Caco-2 (cell line): ENCODE measurements at regions of chr7 and their contacts with region 1.

Region 1: GRCh38 chr7:143345428-143345900 is 17.0 kb downstream of the FAM131B start:
- DNase-seq: peak; percentile 85 to 86
- H3K4me3 ChIP-seq: peak overlapping the region; percentile 36
- H3K4me3 Mint-ChIP-seq: peak overlapping the region; percentile 78
- H3K27ac Mint-ChIP-seq: peak overlapping the region; percentile 40
- H3K4me1 ChIP-seq: no peaks in the 10 kb centered on the region
- H3K4me1 Mint-ChIP-seq: peaks cover 6% of the 10 kb centered on the region
- H3K27me3 ChIP-seq: no peaks in the 10 kb centered on the region
- H3K27me3 Mint-ChIP-seq: no peaks in the 10 kb centered on the region
- CTCF ChIP-seq: peak; percentile 58 to 86

Region 2: GRCh38 chr7:143279186-143280098 is 66.0 kb before region 1 on chr7:
- CTCF ChIA-PET with region 1: no interaction called
- POLR2A ChIA-PET with region 1: no interaction called
- intact Hi-C with region 1: no loop called
- DNase-seq: peak in 1 of 2 experiments; percentile 46
- H3K4me3 ChIP-seq: no peak overlapping the region
- H3K4me3 Mint-ChIP-seq: no peak overlapping the region
- H3K27ac Mint-ChIP-seq: peak overlapping the region; percentile 42
- H3K4me1 ChIP-seq: peaks cover 21% of the 10 kb centered on the region
- H3K4me1 Mint-ChIP-seq: peaks cover 24% of the 10 kb centered on the region
- H3K27me3 ChIP-seq: no peaks in the 10 kb centered on the region
- H3K27me3 Mint-ChIP-seq: no peaks in the 10 kb centered on the region
- CTCF ChIP-seq: no peak

Region 3: GRCh38 chr7:143362131-143363015 is 16.9 kb after region 1 on chr7 and contains the start of gene FAM131B:
- CTCF ChIA-PET with region 1: interaction called, 3 read pairs
- POLR2A ChIA-PET with region 1: interaction called, 3 read pairs
- intact Hi-C with region 1: loop called (anchors 1 kb)
- DNase-seq: peak; percentile 36 to 52
- H3K4me3 ChIP-seq: peak within 1 kb of the TSS; percentile 52
- H3K4me3 Mint-ChIP-seq: peak within 1 kb of the TSS; percentile 94
- H3K27ac Mint-ChIP-seq: peak within 1 kb of the TSS; percentile 55
- H3K4me1 ChIP-seq: peaks cover 4% of the 10 kb centered on the region; the same call in 1 of the 2 replicates
- H3K4me1 Mint-ChIP-seq: peaks cover 23% of the 10 kb centered on the region
- H3K27me3 ChIP-seq: no peaks in the 10 kb centered on the region
- H3K27me3 Mint-ChIP-seq: peaks cover 3% of the 10 kb centered on the region
- CTCF ChIP-seq: no peak
- total RNA-seq, gene FAM131B: 20.2 and 22.3 TPM in 2 replicates

Region 4: DNA sequence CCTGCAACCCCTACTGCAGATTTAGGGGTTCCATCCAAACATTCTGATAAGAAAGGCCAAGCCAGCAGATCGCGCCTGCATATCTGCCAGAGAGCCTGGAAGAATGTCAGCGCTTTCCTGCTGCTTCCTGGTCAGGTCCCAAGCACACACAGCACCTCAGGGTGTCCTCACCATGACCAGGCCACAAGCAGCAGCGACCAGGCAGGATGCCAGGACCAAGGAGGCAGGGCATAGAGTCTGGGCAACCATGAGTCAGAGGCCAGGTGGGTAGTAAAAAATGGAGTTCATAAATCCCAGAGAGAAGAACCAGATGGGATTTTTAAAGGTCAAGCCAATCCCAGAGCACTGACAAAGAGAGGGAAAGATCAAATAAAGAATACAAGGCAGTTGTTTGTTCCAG is 22.5 kb after region 1 on chr7:
- CTCF ChIA-PET with region 1: interaction called, 20 read pairs
- POLR2A ChIA-PET with region 1: interaction called, 4 read pairs
- intact Hi-C with region 1: loop called (anchors 1 kb)
- DNase-seq: peak in 1 of 2 experiments; percentile 32
- H3K4me3 ChIP-seq: no peak overlapping the region
- H3K4me3 Mint-ChIP-seq: no peak overlapping the region
- H3K27ac Mint-ChIP-seq: peak overlapping the region; percentile 96
- H3K4me1 ChIP-seq: peaks cover 49% of the 10 kb centered on the region
- H3K4me1 Mint-ChIP-seq: peaks cover 54% of the 10 kb centered on the region
- H3K27me3 ChIP-seq: no peaks in the 10 kb centered on the region
- H3K27me3 Mint-ChIP-seq: no peaks in the 10 kb centered on the region
- CTCF ChIP-seq: no peak

Region 5: GRCh38 chr7:143408686-143409561 is 63.5 kb after region 1 on chr7 and contains the start of gene EPHA1:
- CTCF ChIA-PET with region 1: no interaction called
- POLR2A ChIA-PET with region 1: no interaction called
- intact Hi-C with region 1: loop called (anchors 5 kb)
- DNase-seq: peak; percentile 86 to 88
- H3K4me3 ChIP-seq: peak within 1 kb of the TSS; percentile 59
- H3K4me3 Mint-ChIP-seq: peak within 1 kb of the TSS; percentile 86
- H3K27ac Mint-ChIP-seq: peak within 1 kb of the TSS; percentile 86
- H3K4me1 ChIP-seq: peaks cover 49% of the 10 kb centered on the region
- H3K4me1 Mint-ChIP-seq: peaks cover 68% of the 10 kb centered on the region
- H3K27me3 ChIP-seq: no peaks in the 10 kb centered on the region
- H3K27me3 Mint-ChIP-seq: no peaks in the 10 kb centered on the region
- CTCF ChIP-seq: peak; percentile 68 to 87
- total RNA-seq, gene EPHA1: 66.6 and 69.2 TPM in 2 replicates

Region 6: DNA sequence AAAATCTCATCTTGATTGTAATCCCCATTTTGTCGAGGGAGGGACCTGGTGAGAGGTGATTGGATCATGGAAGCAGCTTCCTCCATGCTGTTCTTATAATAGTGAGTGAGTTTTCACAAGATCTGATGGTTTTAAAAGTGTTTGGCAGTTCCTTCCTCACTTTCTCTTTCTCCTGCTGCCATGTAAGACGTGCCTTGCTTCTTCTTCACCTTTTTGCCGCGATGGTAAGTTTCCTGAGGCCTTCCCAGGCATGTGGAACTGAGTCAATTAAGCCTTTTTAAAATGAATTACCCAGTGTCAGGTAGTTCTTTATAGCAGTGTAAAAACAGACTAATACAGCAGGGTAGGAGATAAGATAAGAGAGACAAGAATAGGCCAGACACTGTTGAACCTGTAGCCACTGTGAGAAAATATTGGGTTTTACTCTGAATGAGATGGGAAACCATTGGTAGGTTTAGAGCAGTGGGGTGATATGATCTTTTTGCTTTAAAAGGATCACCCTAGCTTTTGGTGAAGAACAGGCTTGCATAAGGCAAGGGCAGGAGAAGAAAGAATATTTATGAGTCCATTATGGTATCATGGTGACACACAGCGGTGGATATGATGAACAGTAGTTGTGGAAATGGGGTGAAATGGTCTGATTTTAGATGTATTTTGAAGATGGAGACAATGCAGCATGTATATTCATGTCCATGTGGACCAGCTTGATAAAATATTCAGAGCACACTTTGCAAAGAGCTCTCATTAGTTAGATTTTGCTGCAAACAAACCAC is 666.2 kb after region 1 on chr7:
- CTCF ChIA-PET with region 1: no interaction called
- POLR2A ChIA-PET with region 1: no interaction called
- intact Hi-C with region 1: no loop called
- DNase-seq: no peak
- H3K4me3 ChIP-seq: no peak overlapping the region
- H3K4me3 Mint-ChIP-seq: no peak overlapping the region
- H3K27ac Mint-ChIP-seq: no peak overlapping the region
- H3K4me1 ChIP-seq: no peaks in the 10 kb centered on the region
- H3K4me1 Mint-ChIP-seq: peaks cover 8% of the 10 kb centered on the region
- H3K27me3 ChIP-seq: no peaks in the 10 kb centered on the region
- H3K27me3 Mint-ChIP-seq: no peaks in the 10 kb centered on the region
- CTCF ChIP-seq: no peak